ENCODE measurements at regions of chr21 and their contacts with region 1.

Region 1: GRCh38 chr21:43001295-43001694 is 26.9 kb downstream of the PKNOX1 start:
- DNase-seq: peak in 1 of 2 donors; percentile 16
- ATAC-seq: peak; percentile 30 to 36
- H3K4me3 ChIP-seq: no peak overlapping the region
- H3K27ac ChIP-seq: no peak overlapping the region
- H3K4me1 ChIP-seq: peaks cover 7 to 11% of the 10 kb centered on the region in 2 donors
- H3K27me3 ChIP-seq: no peaks in the 10 kb centered on the region
- CTCF ChIP-seq: no peak
- POLR2A ChIP-seq: no peak

Region 2: GRCh38 chr21:41570791-41571355 is 1430.4 kb before region 1 on chr21:
- in situ Hi-C with region 1: no loop called
- intact Hi-C with region 1: no loop called
- DNase-seq: no peak
- ATAC-seq: no peak
- H3K4me3 ChIP-seq: no peak overlapping the region
- H3K27ac ChIP-seq: no peak overlapping the region
- H3K4me1 ChIP-seq: no peaks in the 10 kb centered on the region
- H3K27me3 ChIP-seq: no peaks in the 10 kb centered on the region
- CTCF ChIP-seq: no peak
- POLR2A ChIP-seq: no peak

Region 3: GRCh38 chr21:42939582-42940410 is 61.5 kb before region 1 on chr21:
- in situ Hi-C with region 1: no loop called
- intact Hi-C with region 1: loop called (anchors 10 kb)
- DNase-seq: peak; percentile 78 to 90
- ATAC-seq: peak; percentile 100
- H3K4me3 ChIP-seq: peak overlapping the region in 3 of 4 donors; percentile 1 to 22 (median 21)
- H3K27ac ChIP-seq: peak overlapping the region; percentile 52 to 64 (median 56)
- H3K4me1 ChIP-seq: peaks cover 11 to 14% of the 10 kb centered on the region in 2 donors
- H3K27me3 ChIP-seq: no peaks in the 10 kb centered on the region
- CTCF ChIP-seq: no peak
- POLR2A ChIP-seq: no peak